ENCODE measurements at regions of chr16 and their contacts with region 1.

Region 1: GRCh38 chr16:29112755-29113347 is 128.0 kb downstream of the LAT start:
- DNase-seq: no peak
- ATAC-seq: no peak
- H3K4me3 ChIP-seq: no peak overlapping the region
- H3K27ac ChIP-seq: no peak overlapping the region
- H3K4me1 ChIP-seq: peaks cover 0 to 27% (median 12%) of the 10 kb centered on the region in 12 donors
- H3K27me3 ChIP-seq: no peaks in the 10 kb centered on the region
- CTCF ChIP-seq: no peak
- POLR2A ChIP-seq: no peak

Region 2: GRCh38 chr16:29148867-29149272 is 36.0 kb after region 1 on chr16:
- intact Hi-C with region 1: no loop called
- DNase-seq: peak; percentile 41 to 81 (median 63)
- ATAC-seq: peak in 3 of 4 donors; percentile 49 to 82 (median 49)
- H3K4me3 ChIP-seq: no peak overlapping the region
- H3K27ac ChIP-seq: peak overlapping the region in 1 of 12 donors; percentile 72
- H3K4me1 ChIP-seq: peaks cover 0 to 20% (median 0%) of the 10 kb centered on the region in 12 donors
- H3K27me3 ChIP-seq: no peaks in the 10 kb centered on the region
- CTCF ChIP-seq: no peak
- POLR2A ChIP-seq: no peak

Region 3: GRCh38 chr16:29256501-29256981 is 143.7 kb after region 1 on chr16:
- intact Hi-C with region 1: loop called in 7 of 10 experiments (anchors 5 to 10 kb)
- DNase-seq: no peak
- ATAC-seq: no peak
- H3K4me3 ChIP-seq: no peak overlapping the region
- H3K27ac ChIP-seq: no peak overlapping the region
- H3K4me1 ChIP-seq: peaks cover 0 to 38% (median 8%) of the 10 kb centered on the region in 12 donors
- H3K27me3 ChIP-seq: no peaks in the 10 kb centered on the region
- CTCF ChIP-seq: no peak
- POLR2A ChIP-seq: no peak